ENCODE measurements at regions of chr5 and their contacts with region 1.

Region 1: GRCh38 chr5:178075840-178076548 is 37.3 kb upstream of the N4BP3 start:
- DNase-seq: peak in 3 of 4 donors; percentile 43 to 63 (median 50)
- ATAC-seq: peak; percentile 93
- H3K4me3 ChIP-seq: no peak overlapping the region
- H3K27ac ChIP-seq: no peak overlapping the region
- H3K4me1 ChIP-seq: peaks cover 0 to 2% of the 10 kb centered on the region in 2 donors
- H3K27me3 ChIP-seq: peaks cover 6 to 27% of the 10 kb centered on the region in 2 donors
- CTCF ChIP-seq: peak; percentile 74 to 89

Region 2: DNA sequence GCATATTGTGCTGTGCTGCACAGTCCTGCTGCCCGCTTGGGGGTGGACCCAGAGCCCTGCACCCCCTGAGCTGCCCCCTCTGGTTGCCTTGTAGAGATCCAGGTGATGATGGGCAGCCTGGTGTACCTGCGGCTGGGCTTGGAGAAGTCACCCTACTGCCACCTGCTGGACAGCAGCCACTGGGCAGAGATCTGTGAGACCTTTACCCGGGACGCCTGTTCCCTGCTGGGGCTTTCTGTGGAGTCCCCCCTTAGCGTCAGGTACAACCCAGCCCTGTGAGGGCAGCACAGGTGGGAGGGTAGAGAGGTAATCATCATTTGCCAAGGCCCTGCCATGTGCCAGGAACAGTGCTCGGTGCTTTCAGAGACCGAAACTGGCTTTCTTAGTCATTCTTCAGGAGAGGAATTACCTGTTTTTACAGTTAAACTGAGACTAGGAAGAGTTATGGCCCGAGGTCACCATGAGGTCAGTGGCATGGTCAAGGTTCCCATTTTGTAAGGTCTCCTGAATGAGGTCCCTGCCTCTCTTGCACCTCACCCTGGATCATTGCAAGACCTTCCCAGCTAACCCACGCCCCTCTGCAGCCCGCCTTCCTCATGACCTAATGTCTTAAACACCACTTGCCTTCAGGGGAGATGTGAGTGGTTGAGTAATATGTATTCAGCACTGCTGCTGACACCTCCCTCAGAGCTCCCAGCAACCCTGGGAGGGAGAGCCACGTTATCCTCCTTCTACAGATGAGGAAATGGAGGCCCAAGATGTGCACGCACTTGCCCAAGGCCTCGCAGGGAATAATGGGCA is 70.2 kb after region 1 on chr5:
- intact Hi-C with region 1: loop called (anchors 5 kb)
- DNase-seq: peak in 3 of 4 donors; percentile 43 to 76 (median 52)
- ATAC-seq: peak; percentile 87
- H3K4me3 ChIP-seq: no peak overlapping the region
- H3K27ac ChIP-seq: no peak overlapping the region
- H3K4me1 ChIP-seq: no peaks in the 10 kb centered on the region
- H3K27me3 ChIP-seq: no peaks in the 10 kb centered on the region
- CTCF ChIP-seq: peak; percentile 58 to 61

Region 3: DNA sequence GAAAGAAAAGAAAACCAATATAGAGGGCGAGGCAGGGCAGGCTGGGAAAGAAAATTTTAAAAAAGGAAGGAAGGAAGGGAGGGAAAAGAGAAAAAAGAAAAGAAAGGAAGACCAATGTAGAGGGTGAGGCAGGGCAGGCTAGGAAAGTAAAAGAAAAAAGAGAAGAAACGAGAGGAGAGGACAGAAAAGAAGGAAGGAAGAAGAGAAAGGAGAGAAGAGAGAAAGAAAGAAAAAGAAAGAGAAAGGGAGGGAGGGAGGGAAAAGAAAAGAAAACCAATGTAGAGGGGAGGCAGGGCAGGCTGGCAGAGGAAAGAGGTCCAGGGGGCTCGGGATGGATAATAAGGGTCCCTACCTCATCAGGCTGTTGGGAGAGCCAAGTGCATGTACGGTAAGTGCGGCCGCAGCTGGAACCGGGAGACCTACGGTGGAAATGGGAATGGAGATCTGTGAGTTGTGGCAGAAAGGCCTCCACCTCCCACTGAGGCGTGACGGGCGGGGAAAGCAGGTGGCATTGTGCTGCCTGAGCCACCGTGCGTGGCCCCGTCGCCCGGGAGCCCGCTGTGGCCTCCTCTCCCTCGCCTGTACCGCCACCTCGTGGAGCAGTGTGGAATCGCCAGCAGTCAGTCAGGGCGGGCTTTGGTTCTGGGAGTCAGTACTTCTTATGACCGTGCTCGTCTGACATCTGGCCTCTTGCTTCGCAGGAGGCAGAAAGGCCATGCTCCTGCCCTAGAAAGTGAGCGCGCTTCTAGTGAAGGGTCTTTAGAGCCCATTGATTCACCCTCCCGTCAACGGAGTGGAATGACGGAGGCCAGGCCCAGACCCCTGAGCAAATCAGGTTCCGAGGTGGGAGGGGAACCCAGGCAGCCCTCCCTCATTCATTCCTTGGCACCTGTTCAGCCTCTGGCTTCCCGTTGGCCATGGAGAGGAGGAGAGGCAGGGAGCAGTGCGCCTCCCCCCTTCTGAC is 88.1 kb after region 1 on chr5:
- intact Hi-C with region 1: loop called in 1 of 2 experiments (anchors 2 kb)
- DNase-seq: peak; percentile 70 to 97 (median 83)
- ATAC-seq: peak; percentile 100
- H3K4me3 ChIP-seq: peak overlapping the region in 1 of 2 donors; percentile 7
- H3K27ac ChIP-seq: no peak overlapping the region
- H3K4me1 ChIP-seq: peaks cover 0 to 8% of the 10 kb centered on the region in 2 donors
- H3K27me3 ChIP-seq: peaks cover 0 to 43% of the 10 kb centered on the region in 2 donors
- CTCF ChIP-seq: peak; percentile 98 to 99

Measured in left lung (tissue), 14 donors.